Stomach (tissue), 19 donors: ENCODE measurements at regions of chr3 and their contacts with region 1.

Region 1: GRCh38 chr3:9074079-9074478 is 110.8 kb upstream of the RAD18 start:
- DNase-seq: no peak
- H3K4me3 ChIP-seq: no peak overlapping the region
- H3K27ac ChIP-seq: no peak overlapping the region
- H3K4me1 ChIP-seq: no peaks in the 10 kb centered on the region
- H3K27me3 ChIP-seq: no peaks in the 10 kb centered on the region
- CTCF ChIP-seq: no peak
- EP300 ChIP-seq: no peak
- POLR2A ChIP-seq: no peak

Region 2: GRCh38 chr3:8990266-8991215 is 83.5 kb before region 1 on chr3:
- intact Hi-C with region 1: loop called (anchors 5 kb)
- DNase-seq: peak in 1 of 2 donors; percentile 73
- H3K4me3 ChIP-seq: no peak overlapping the region
- H3K27ac ChIP-seq: no peak overlapping the region
- H3K4me1 ChIP-seq: peaks cover 0 to 6% (median 4%) of the 10 kb centered on the region in 4 donors
- H3K27me3 ChIP-seq: no peaks in the 10 kb centered on the region
- CTCF ChIP-seq: no peak
- EP300 ChIP-seq: no peak
- POLR2A ChIP-seq: no peak